HEK293 (cell line): ENCODE measurements at regions of chr22 and their contacts with region 1.

Region 1: GRCh38 chr22:22710719-22711531 is 66.5 kb downstream of the GGTLC2 start:
- H3K4me3 ChIP-seq: no peak overlapping the region
- H3K27ac ChIP-seq: no peak overlapping the region
- H3K4me1 ChIP-seq: no peaks in the 10 kb centered on the region
- CTCF ChIP-seq: peak; percentile 56; the same call in 1 of the 2 replicates

Region 2: GRCh38 chr22:22395245-22395644 is 315.7 kb before region 1 on chr22:
- CTCF ChIA-PET with region 1: no interaction called
- POLR2A ChIA-PET with region 1: no interaction called
- H3K4me3 ChIP-seq: no peak overlapping the region
- H3K27ac ChIP-seq: no peak overlapping the region
- H3K4me1 ChIP-seq: no peaks in the 10 kb centered on the region
- CTCF ChIP-seq: no peak

Region 3: GRCh38 chr22:22486132-22486899 is 224.6 kb before region 1 on chr22:
- CTCF ChIA-PET with region 1: no interaction called
- POLR2A ChIA-PET with region 1: no interaction called
- H3K4me3 ChIP-seq: no peak overlapping the region
- H3K27ac ChIP-seq: no peak overlapping the region
- H3K4me1 ChIP-seq: no peaks in the 10 kb centered on the region
- CTCF ChIP-seq: no peak

Region 4: GRCh38 chr22:22576244-22576988 is 134.5 kb before region 1 on chr22:
- CTCF ChIA-PET with region 1: interaction called, 16 read pairs
- POLR2A ChIA-PET with region 1: no interaction called
- H3K4me3 ChIP-seq: no peak overlapping the region
- H3K27ac ChIP-seq: no peak overlapping the region
- H3K4me1 ChIP-seq: no peaks in the 10 kb centered on the region
- CTCF ChIP-seq: peak; percentile 61; the same call in 1 of the 2 replicates

Region 5: DNA sequence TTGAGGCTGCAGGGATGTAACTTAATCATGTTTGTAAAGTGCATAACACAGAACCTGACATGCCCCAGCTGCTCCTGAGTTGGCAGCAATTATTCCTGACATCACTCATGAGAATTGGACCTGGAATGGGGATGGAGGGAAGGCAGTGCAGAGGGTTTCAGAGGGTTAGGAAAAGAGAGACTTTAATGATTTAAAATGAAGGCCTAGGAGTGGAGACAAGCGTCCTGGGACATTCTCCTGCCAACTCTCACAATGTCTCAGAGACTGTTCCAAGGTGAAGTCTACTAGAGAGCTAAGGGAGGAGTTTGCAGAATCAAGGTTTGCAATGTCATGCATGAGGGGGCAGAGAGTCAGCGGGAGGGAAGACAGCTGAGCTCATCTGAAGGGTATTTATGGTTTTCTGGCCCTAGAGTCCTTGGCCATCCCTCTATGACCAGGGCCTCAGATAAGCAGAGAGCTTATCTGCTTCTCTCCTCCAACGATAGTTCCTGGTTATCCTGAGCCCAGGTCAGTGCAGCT is 29.6 kb before region 1 on chr22:
- CTCF ChIA-PET with region 1: interaction called, 15 read pairs
- POLR2A ChIA-PET with region 1: no interaction called
- H3K4me3 ChIP-seq: no peak overlapping the region
- H3K27ac ChIP-seq: no peak overlapping the region
- H3K4me1 ChIP-seq: no peaks in the 10 kb centered on the region
- CTCF ChIP-seq: no peak

Region 6: DNA sequence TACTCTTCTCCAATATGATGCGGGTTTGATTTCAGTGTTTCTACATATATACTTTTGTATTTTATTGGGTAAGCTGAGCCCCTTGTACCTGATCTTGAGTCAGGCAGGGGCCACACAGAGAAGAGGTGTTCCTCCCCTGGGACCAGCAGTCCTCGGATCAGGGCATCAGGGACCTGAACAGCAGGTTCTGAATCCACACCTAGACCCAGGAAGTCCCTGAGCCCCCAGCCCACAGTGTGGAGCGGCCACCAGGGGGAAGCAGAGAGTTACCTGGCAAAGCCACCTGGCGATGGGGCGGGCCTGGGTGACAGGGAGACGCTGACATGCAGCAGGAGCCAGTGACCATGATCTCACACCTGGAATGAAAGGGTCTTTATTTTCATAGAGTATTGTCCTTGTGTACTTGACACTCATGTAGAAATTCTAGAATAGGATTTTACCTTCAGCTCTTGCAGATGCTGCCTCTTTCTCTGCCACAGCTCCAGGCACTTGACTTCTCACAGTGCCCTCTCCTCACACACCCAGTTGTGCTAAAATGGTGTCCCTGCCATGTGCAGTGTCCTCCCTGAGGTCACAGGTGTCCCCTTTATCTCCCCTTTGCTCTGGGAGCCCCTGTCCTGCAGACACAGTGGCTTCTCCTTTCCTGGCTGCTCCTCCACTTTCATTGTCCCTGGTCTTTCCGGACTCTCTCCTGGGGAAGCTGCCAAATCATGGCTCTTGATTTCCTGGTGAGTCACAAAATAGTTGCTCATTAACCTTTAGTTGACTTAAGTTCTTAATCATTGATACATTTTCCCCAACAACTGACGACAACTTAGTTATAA is 18.0 kb before region 1 on chr22:
- CTCF ChIA-PET with region 1: interaction called, 32 read pairs
- POLR2A ChIA-PET with region 1: interaction called, 3 read pairs
- H3K4me3 ChIP-seq: no peak overlapping the region
- H3K27ac ChIP-seq: no peak overlapping the region
- H3K4me1 ChIP-seq: no peaks in the 10 kb centered on the region
- CTCF ChIP-seq: no peak

Region 7: DNA sequence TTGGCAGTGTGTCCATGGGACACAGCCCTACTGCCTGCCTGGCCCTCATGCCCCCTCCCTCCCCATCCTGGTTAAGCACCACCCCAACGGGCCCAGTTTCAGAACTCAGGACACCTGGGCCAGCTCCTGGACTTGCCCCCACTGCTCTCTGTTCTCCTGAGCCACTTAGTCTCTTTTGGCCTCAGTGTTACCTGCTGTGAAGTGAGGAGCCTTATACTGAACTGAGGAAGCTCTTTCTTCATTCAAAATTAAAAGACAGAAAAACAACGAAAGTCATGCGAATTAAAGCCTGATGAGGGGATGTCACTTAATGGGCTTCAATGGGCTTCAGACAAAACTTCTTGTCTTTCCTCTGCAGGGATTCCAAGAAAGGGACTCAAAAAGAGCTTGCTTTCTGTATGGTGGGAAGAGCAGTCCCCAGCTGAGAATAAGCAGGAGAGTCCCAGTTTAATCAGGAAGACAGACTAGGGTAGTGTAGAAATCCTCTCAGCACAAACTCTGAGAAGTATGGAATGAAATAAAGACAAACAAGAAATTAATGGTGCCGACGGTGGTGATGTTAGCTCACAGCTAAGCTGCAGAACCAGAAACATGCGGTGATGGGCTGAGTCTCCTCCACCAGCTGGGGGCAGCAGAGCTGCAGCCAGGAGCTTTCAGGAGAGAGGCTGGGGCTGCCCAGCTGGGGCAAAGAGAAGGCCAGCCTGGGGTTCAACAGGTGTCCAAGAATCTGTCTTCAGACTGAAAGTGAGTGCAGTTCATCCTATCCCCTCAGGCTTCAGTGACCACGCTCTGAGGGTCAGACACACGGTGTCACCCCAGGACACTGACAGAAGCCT is 34.5 kb after region 1 on chr22:
- CTCF ChIA-PET with region 1: interaction called, 36 read pairs
- POLR2A ChIA-PET with region 1: no interaction called
- H3K4me3 ChIP-seq: no peak overlapping the region
- H3K27ac ChIP-seq: no peak overlapping the region
- H3K4me1 ChIP-seq: no peaks in the 10 kb centered on the region
- CTCF ChIP-seq: peak; percentile 57; the same call in 1 of the 2 replicates

Region 8: GRCh38 chr22:22836635-22837034 is 125.7 kb after region 1 on chr22:
- CTCF ChIA-PET with region 1: no interaction called
- POLR2A ChIA-PET with region 1: no interaction called
- H3K4me3 ChIP-seq: no peak overlapping the region
- H3K27ac ChIP-seq: no peak overlapping the region
- H3K4me1 ChIP-seq: no peaks in the 10 kb centered on the region
- CTCF ChIP-seq: no peak